ENCODE measurements at regions of chr1 and their contacts with region 1.

Region 1: DNA sequence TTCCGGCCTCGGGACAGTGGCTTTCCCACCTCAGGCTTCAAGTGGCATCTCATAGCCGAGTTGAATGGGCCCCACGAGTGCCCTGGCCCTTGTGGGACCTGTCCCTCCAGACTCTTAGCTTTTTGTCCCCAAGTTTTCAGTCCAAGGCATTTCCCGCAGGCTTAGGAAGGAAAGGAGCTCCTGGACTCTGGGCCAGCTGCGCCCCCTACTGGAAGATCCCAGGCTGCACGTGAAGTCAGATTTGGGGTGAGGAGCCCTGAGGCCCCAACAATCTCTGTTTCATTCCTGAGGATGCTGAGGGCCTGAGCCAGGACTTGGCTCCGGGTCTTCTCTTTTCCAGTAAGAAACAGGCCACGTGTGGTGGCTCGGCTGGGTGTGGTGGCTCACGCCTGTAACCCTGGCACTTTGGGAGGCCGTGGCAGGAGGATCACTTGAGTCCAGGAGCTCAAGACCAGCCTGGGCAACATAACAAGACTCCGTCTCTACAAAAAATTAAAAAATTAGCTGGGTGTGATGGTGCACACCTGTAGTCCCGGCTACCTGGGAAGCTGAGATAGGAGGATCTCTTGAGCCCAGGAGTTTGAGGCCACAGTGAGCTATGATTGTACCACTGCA is 67.4 kb downstream of the ARHGEF10L start:
- DNase-seq: peak; percentile 10
- H3K4me3 Mint-ChIP-seq: no peak overlapping the region
- H3K27ac Mint-ChIP-seq: no peak overlapping the region
- H3K4me1 Mint-ChIP-seq: no peaks in the 10 kb centered on the region
- H3K27me3 Mint-ChIP-seq: no peaks in the 10 kb centered on the region

Region 2: GRCh38 chr1:17496419-17496818 is 110.5 kb before region 1 on chr1:
- intact Hi-C with region 1: loop called (anchors 2 kb)
- DNase-seq: no peak
- H3K4me3 Mint-ChIP-seq: no peak overlapping the region
- H3K27ac Mint-ChIP-seq: no peak overlapping the region
- H3K4me1 Mint-ChIP-seq: no peaks in the 10 kb centered on the region
- H3K27me3 Mint-ChIP-seq: peaks cover 2% of the 10 kb centered on the region

Measured in activated T-helper 2 cell treated with anti-CD3 and anti-CD28 coated beads, Interferon-gamma antibody, Interleukin-2, Interleukin-4, amounts not matched to agents 10 μg/mL and 5 μg/mL and 100 μg/mL, durations not matched to agents 14 hours and 24 hours and 36 hours (primary cell).